Thyroid gland (tissue), 4 donors: ENCODE measurements at regions of chr10 and their contacts with region 1.

Region 1: DNA sequence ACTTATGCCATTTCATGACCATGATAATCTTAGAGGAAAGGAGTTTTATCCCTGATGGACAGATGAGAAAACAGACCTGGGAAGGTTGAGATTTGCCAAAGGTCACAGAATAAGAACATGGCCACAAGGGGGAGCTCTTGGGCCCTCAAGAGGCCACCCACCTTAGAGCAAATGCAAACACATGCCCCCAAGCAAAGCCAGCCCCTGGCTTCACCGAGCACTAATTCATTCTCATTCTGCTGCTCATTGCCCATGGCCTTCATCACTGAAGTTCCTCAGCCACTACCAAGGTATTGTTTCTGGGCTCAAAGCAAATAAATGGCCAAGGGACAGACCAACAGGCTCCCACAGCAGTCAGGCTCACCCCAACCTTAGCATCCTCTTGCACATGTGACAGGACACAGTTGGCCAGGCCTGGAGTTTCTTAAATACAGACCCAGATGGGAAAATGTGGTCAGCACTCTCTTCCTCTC is 44.2 kb downstream of the PDLIM1 start:
- DNase-seq: peak; percentile 75 to 80
- H3K4me3 ChIP-seq: no peak overlapping the region
- H3K27ac ChIP-seq: peak overlapping the region in 2 of 3 donors; percentile 1 to 52
- H3K4me1 ChIP-seq: peaks cover 13 to 28% of the 10 kb centered on the region in 2 donors
- H3K27me3 ChIP-seq: no peaks in the 10 kb centered on the region
- CTCF ChIP-seq: peak; percentile 66 to 84 (median 76)
- POLR2A ChIP-seq: no peak

Region 2: GRCh38 chr10:95183271-95184230 is 63.1 kb before region 1 on chr10:
- intact Hi-C with region 1: loop called (anchors 10 kb)
- DNase-seq: peak; percentile 86 to 90
- H3K4me3 ChIP-seq: peak overlapping the region; percentile 26 to 81 (median 64)
- H3K27ac ChIP-seq: peak overlapping the region; percentile 87 to 95 (median 92)
- H3K4me1 ChIP-seq: peaks cover 0 to 5% of the 10 kb centered on the region in 2 donors
- H3K27me3 ChIP-seq: no peaks in the 10 kb centered on the region
- CTCF ChIP-seq: peak; percentile 47 to 98 (median 95)
- POLR2A ChIP-seq: peak in 1 of 2 donors; percentile 56

Region 3: DNA sequence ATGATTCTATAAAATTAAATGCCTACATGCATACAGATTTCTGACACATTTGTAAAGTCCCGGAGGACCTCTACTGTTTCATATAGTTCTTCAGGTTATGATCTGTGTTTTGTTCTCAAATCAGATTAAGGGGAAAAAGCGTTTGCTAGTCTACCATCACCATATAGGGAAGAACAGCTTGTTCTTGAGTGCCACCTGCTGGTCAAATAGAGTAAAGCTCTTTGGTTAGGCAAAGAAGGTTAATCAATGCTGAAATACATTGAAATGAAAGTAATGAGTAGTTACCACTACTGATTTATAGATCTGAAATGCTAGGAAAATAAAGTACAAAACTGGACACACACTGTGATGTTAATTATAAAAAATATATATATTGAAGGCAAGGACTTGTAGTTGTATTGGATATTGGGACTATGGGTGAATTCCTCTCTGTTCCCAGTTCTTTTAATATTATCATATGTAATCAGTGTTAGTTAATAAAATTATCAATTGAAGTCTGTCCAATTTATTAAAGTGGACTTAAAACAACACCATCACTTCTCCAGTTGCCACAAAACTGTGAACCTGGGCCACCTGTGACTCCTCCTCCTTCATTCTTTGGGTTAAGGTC is 116.8 kb after region 1 on chr10:
- intact Hi-C with region 1: loop called (anchors 2 kb)
- DNase-seq: peak; percentile 24 to 35
- H3K4me3 ChIP-seq: no peak overlapping the region
- H3K27ac ChIP-seq: no peak overlapping the region
- H3K4me1 ChIP-seq: peaks cover 6 to 27% of the 10 kb centered on the region in 2 donors
- H3K27me3 ChIP-seq: no peaks in the 10 kb centered on the region
- CTCF ChIP-seq: peak; percentile 69 to 96 (median 90)
- POLR2A ChIP-seq: no peak